ENCODE measurements at regions of chr6 and their contacts with region 1.

Region 1: DNA sequence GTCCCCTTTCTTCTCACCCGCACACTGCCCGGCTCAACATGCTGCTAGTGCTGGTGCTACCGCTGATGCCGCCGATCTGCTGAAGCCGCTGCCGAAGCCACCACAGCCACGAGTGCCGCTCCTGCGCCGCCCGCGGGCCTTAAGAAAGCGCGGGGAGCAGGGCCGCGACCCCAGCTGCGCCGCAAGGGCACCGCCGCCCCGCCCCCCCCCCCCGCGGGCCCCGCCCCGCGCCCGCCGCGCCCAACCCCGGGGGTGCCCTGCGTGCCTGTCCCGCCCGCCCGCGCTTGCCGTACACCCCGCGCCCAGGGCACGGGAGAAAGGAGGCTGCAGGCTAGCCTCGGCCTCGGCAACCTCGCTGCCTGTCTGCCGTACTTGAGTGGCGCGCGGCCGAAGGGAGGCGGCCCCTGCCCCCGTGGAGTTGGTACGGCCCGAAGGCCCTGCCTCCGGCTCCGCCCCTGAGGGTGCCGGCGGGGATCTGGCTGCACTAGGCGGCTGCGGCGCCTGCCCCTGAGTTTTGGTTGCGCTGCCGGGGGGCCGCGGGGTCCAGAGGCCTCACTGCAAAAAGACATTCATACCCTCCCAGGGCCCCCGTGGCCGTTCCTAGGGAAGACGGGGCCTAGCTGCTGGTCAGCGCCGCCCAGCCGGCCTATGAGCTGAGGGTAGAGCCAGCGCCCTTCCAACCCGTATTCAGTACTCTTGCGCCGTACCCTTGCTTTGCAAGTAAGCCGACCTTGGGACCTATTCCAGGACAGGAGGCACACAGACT is at the start of gene SOD2:
- DNase-seq: peak; percentile 67 to 92 (median 81)
- ATAC-seq: peak; percentile 77
- H3K4me3 ChIP-seq: peak within 1 kb of the TSS; percentile 54 to 78
- H3K4me3 Mint-ChIP-seq: peak within 1 kb of the TSS; percentile 96
- H3K27ac ChIP-seq: peak within 1 kb of the TSS; percentile 67 to 85
- H3K27ac Mint-ChIP-seq: peak within 1 kb of the TSS; percentile 97
- H3K4me1 ChIP-seq: peaks cover 28% of the 10 kb centered on the region
- H3K4me1 Mint-ChIP-seq: peaks cover 39% of the 10 kb centered on the region
- H3K27me3 ChIP-seq: no peaks in the 10 kb centered on the region
- H3K27me3 Mint-ChIP-seq: no peaks in the 10 kb centered on the region
- CTCF ChIP-seq: no peak
- total RNA-seq, gene SOD2: 99.1 to 99.6 TPM

Region 2: DNA sequence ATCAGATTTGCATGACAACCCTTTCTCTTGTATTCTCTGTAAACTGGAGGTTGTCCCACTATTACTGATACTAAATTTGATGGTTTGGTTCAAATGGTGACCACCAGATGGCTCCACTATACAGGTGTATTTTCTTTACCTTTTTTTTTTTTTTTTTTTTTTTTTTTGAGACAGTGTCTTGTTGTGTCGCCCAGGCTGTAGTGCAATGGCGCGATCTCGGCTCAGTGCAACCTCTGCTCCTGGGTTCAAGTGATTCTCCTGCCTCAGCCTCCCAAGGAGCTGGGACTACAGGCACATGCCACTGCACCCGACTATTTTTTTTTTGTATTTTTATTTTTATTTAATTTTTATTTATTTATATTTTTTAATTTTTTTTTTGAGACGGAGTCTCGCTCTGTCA is 27.4 kb after region 1 on chr6:
- CTCF ChIA-PET with region 1: interaction called, 19 read pairs
- POLR2A ChIA-PET with region 1: interaction called, 11 read pairs
- intact Hi-C with region 1: loop called in 1 of 2 experiments (anchors 1 kb)
- DNase-seq: peak in 5 of 9 experiments; percentile 33 to 84 (median 53)
- ATAC-seq: peak; percentile 74
- H3K4me3 ChIP-seq: no peak overlapping the region
- H3K4me3 Mint-ChIP-seq: no peak overlapping the region
- H3K27ac ChIP-seq: no peak overlapping the region
- H3K27ac Mint-ChIP-seq: no peak overlapping the region
- H3K4me1 ChIP-seq: peaks cover 6% of the 10 kb centered on the region
- H3K4me1 Mint-ChIP-seq: peaks cover 16% of the 10 kb centered on the region
- H3K27me3 ChIP-seq: no peaks in the 10 kb centered on the region
- H3K27me3 Mint-ChIP-seq: no peaks in the 10 kb centered on the region
- CTCF ChIP-seq: peak; percentile 65

Region 3: GRCh38 chr6:159761873-159762680 is 68.8 kb after region 1 on chr6 and contains the start of gene ACAT2:
- CTCF ChIA-PET with region 1: interaction called, 10 read pairs
- POLR2A ChIA-PET with region 1: interaction called, 8 read pairs
- intact Hi-C with region 1: loop called (anchors 1 kb)
- DNase-seq: peak; percentile 81 to 96 (median 91)
- ATAC-seq: peak; percentile 86
- H3K4me3 ChIP-seq: peak within 1 kb of the TSS; percentile 85 to 99
- H3K4me3 Mint-ChIP-seq: peak within 1 kb of the TSS; percentile 96
- H3K27ac ChIP-seq: peak within 1 kb of the TSS; percentile 97 to 99
- H3K27ac Mint-ChIP-seq: peak within 1 kb of the TSS; percentile 97
- H3K4me1 ChIP-seq: peaks cover 16% of the 10 kb centered on the region
- H3K4me1 Mint-ChIP-seq: peaks cover 29% of the 10 kb centered on the region
- H3K27me3 ChIP-seq: no peaks in the 10 kb centered on the region
- H3K27me3 Mint-ChIP-seq: no peaks in the 10 kb centered on the region
- CTCF ChIP-seq: no peak
- total RNA-seq, gene ACAT2: 23.3 to 24.1 TPM

Region 4: DNA sequence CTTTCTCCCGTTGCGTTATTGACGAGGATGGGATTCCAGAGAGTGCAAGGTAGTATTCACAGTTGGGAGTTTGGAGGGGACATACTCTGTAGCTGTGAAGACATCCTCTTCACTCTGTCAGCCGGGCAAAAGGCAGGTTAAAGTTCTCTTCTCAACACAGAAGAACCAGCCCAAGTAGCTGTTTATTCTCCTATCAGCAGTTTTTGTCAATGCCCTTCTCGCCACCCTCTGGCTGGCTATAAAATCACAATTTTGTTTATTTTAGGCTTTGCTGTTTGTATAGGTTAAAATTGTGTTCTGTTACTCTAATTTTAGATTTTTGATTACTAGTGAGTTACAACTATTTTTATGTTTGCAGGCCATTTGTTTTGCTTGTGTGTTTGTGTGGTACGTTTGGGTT is 159.6 kb after region 1 on chr6:
- CTCF ChIA-PET with region 1: interaction called, 26 read pairs
- POLR2A ChIA-PET with region 1: interaction called, 7 read pairs
- intact Hi-C with region 1: loop called (anchors 1 to 2 kb)
- DNase-seq: peak in 3 of 9 experiments; percentile 29 to 56 (median 41)
- ATAC-seq: peak; percentile 58
- H3K4me3 ChIP-seq: no peak overlapping the region
- H3K4me3 Mint-ChIP-seq: no peak overlapping the region
- H3K27ac ChIP-seq: no peak overlapping the region
- H3K27ac Mint-ChIP-seq: no peak overlapping the region
- H3K4me1 ChIP-seq: no peaks in the 10 kb centered on the region
- H3K4me1 Mint-ChIP-seq: peaks cover 8% of the 10 kb centered on the region
- H3K27me3 ChIP-seq: no peaks in the 10 kb centered on the region
- H3K27me3 Mint-ChIP-seq: peaks cover 1% of the 10 kb centered on the region
- CTCF ChIP-seq: peak; percentile 51

Region 5: DNA sequence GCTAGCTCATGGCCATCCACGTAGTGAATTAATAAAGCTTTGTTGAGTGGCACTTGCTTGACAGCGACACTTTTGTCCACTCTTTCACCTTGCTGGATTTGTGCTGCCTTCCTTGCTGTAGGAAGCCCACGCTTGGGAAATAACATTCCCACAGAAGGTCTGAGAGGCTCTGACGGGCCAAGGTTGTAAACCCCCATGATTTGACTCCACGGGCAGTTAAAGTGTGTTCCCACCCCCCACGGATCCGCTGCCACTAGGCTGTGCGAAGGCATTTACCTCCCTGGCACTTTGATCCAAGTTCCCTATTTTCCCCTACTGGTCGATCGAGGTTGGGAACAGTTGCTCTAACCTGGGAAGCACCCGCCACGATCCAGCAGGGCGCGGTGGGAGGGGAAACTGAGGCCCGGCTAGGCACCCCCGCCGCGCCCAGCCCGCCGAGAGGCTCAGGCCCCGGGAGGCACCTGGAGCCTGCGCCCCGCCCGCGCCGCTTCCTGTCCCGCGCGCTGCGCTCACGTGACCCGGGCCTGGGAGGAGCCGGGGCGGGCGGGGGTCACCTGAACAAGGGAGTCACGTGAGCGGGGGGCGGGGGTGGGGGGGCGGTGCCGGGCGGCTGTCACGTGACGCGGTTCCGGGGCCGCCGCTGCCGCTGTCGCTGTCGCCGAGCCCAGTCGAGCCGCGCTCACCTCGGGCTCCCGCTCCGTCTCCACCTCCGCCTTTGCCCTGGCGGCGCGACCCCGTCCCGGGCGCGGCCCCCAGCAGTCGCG is 275.3 kb after region 1 on chr6 and contains the start of gene IGF2R:
- CTCF ChIA-PET with region 1: no interaction called
- POLR2A ChIA-PET with region 1: interaction called, 3 read pairs
- intact Hi-C with region 1: loop called (anchors 1 to 2 kb)
- DNase-seq: peak; percentile 86 to 96 (median 94)
- ATAC-seq: peak; percentile 85
- H3K4me3 ChIP-seq: peak within 1 kb of the TSS; percentile 64 to 67
- H3K4me3 Mint-ChIP-seq: peak within 1 kb of the TSS; percentile 91
- H3K27ac ChIP-seq: peak within 1 kb of the TSS; percentile 59 to 82
- H3K27ac Mint-ChIP-seq: peak within 1 kb of the TSS; percentile 89
- H3K4me1 ChIP-seq: peaks cover 36% of the 10 kb centered on the region
- H3K4me1 Mint-ChIP-seq: peaks cover 42% of the 10 kb centered on the region
- H3K27me3 ChIP-seq: no peaks in the 10 kb centered on the region
- H3K27me3 Mint-ChIP-seq: no peaks in the 10 kb centered on the region
- CTCF ChIP-seq: no peak
- total RNA-seq, gene IGF2R: 38.5 to 40.6 TPM

Region 6: DNA sequence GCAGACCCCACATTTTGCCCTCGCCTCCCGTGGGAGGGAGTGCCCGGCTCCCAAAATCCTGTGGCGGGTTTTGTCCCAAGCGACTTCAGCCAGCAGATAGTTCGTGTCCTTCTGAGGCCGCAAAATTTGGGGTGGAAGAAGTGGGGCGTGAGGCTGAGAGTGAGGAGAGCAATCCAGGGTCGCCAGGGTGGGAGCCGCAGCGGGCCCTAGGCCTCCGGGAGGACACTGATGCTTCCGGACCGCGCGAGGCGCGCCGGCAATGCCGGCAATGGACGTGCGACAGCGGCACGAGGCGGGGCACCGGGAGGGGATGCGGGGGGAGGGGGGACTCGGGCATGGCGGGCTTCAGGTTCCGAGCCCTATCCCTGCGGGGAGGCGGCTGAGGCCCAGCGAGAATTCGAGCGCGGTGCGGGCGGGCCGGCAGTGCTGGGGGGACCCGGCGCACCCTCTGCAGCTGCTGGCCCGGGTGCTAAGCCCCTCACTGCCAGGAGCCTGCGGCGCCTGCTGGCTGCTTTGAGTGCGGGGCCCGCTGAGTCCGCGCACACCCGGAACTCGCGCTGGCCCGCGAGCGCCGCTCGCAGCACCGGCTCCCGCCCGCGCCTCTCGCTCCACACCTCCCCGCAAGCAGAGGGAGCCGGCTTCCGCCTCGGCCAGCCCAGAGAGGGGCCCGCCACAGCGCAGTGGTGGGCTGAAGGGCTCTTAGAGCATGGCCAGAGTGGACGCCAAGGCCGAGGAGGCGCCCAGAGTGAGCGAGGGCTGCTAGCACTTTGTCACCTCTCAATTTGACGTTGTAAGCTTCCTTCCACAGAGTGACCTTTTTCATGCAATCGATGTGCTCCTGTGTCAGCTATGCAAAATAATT is 827.0 kb after region 1 on chr6:
- CTCF ChIA-PET with region 1: no interaction called
- POLR2A ChIA-PET with region 1: no interaction called
- intact Hi-C with region 1: loop called in 1 of 2 experiments (anchors 5 kb)
- DNase-seq: peak; percentile 53 to 88 (median 78)
- ATAC-seq: peak; percentile 81
- H3K4me3 ChIP-seq: peak overlapping the region; percentile 69 to 94
- H3K4me3 Mint-ChIP-seq: peak overlapping the region; percentile 96
- H3K27ac ChIP-seq: peak overlapping the region; percentile 67 to 75
- H3K27ac Mint-ChIP-seq: peak overlapping the region; percentile 94
- H3K4me1 ChIP-seq: peaks cover 12% of the 10 kb centered on the region
- H3K4me1 Mint-ChIP-seq: peaks cover 26% of the 10 kb centered on the region
- H3K27me3 ChIP-seq: no peaks in the 10 kb centered on the region
- H3K27me3 Mint-ChIP-seq: peaks cover 2% of the 10 kb centered on the region
- CTCF ChIP-seq: peak; percentile 95

Region 7: DNA sequence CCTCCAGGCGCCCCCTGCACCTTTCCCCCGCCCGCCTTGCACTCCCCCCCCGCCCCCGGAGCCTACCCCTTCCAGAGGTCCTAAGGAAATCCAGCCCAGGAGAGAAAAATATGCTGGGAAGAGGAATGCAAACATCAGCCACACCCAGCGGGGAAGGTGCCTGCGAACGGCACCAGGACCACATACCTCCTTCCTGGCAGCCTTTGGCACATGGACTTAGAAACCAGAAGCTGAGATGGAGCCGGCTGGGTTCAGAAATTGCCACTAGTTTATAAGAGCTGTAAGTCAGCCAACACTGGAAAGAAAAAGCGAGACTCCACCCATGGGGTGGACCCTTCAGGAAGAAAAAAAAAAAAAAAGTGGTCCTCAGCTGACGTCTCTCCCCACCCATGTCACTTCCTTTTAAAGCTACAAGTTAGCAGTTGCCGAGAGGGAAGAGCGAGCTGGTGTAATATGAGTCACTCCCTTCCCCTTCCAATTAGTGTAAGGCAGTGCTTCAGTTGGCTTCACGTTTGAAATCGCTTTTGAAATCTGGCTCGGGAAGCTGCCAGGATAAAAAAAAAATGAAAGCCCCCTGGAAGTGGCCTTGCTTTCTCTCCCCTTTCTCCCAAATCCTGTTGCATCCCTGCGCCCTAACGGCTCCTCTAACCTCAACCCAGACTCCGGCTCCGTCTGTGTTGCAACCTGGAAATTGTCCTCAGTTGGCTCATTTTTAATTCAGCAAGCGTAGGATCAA is 1580.6 kb after region 1 on chr6 and contains the start of gene AGPAT4:
- CTCF ChIA-PET with region 1: no interaction called
- POLR2A ChIA-PET with region 1: no interaction called
- intact Hi-C with region 1: loop called in 1 of 2 experiments (anchors 10 kb)
- DNase-seq: peak; percentile 39 to 95 (median 63)
- ATAC-seq: peak; percentile 94
- H3K4me3 ChIP-seq: peak within 1 kb of the TSS; percentile 61 to 72
- H3K4me3 Mint-ChIP-seq: peak within 1 kb of the TSS; percentile 90
- H3K27ac ChIP-seq: peak within 1 kb of the TSS; percentile 61 to 85
- H3K27ac Mint-ChIP-seq: peak within 1 kb of the TSS; percentile 91
- H3K4me1 ChIP-seq: peaks cover 14% of the 10 kb centered on the region
- H3K4me1 Mint-ChIP-seq: peaks cover 21% of the 10 kb centered on the region
- H3K27me3 ChIP-seq: no peaks in the 10 kb centered on the region
- H3K27me3 Mint-ChIP-seq: no peaks in the 10 kb centered on the region
- CTCF ChIP-seq: no peak
- total RNA-seq, gene AGPAT4: 1.2 to 2.8 TPM

Measured in CD8-positive, alpha-beta T cell (primary cell).